H1 (cell line): ENCODE measurements at regions of chr7 and their contacts with region 1.

Region 1: DNA sequence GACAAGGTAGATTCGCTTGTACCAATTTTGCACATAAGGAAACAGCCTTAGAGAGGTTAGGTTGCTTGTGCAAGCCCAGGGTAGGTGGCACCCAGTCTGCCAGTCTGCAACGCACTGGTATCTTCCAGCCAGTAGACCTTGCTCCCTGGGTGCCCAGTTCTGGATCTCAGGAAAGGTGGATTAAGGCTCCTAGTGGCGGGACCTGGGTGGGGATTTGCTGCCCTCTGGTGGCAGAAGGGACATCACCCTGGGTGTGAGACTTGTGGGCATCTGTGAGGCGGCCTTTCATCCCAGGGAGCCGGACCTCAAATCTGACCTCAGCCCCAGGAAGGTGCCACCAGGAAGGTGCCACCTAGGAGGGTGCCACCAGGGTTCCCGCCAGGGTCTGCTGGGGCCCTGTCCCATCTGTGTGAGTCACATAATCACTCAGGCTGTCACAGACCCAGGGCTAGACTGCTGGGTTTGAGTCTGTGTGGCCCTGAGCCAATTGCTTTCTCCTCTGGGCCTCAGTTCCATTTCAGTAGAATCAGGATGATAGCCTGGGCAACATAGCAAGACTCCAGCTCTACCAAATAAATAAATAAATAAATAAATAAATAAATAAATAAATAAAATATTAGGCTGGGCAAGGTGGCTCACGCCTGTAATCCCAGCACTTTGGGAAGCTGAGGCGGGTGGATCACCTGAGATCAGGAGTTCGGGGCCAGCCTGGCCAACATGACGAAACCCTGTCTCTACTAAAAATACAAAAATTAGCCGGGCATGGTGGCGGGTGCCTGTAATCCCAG is 5.3 kb upstream of the PRKRIP1 start:
- DNase-seq: peak; percentile 57 to 93
- H3K4me3 ChIP-seq: no peak overlapping the region
- H3K27ac ChIP-seq: no peak overlapping the region
- H3K4me1 ChIP-seq: peaks cover 0 to 3% (median 0%) of the 10 kb centered on the region in 4 experiments; a peak in 1 of 7 replicates
- H3K27me3 ChIP-seq: no peaks in the 10 kb centered on the region
- CTCF ChIP-seq: peak; percentile 94 to 98 (median 94)
- EP300 ChIP-seq: no peak
- POLR2A ChIP-seq: no peak
- RAD21 ChIP-seq: peak; percentile 95

Region 2: GRCh38 chr7:102306875-102307677 is 83.8 kb before region 1 on chr7:
- CTCF ChIA-PET with region 1: interaction called, 52 read pairs
- POLR2A ChIA-PET with region 1: interaction called, 7 read pairs
- DNase-seq: peak in 1 of 2 experiments; percentile 47
- H3K4me3 ChIP-seq: no peak overlapping the region
- H3K27ac ChIP-seq: no peak overlapping the region
- H3K4me1 ChIP-seq: peaks cover 5 to 13% (median 9%) of the 10 kb centered on the region in 4 experiments
- H3K27me3 ChIP-seq: no peaks in the 10 kb centered on the region
- CTCF ChIP-seq: no peak
- EP300 ChIP-seq: no peak
- POLR2A ChIP-seq: no peak
- RAD21 ChIP-seq: no peak

Region 3: DNA sequence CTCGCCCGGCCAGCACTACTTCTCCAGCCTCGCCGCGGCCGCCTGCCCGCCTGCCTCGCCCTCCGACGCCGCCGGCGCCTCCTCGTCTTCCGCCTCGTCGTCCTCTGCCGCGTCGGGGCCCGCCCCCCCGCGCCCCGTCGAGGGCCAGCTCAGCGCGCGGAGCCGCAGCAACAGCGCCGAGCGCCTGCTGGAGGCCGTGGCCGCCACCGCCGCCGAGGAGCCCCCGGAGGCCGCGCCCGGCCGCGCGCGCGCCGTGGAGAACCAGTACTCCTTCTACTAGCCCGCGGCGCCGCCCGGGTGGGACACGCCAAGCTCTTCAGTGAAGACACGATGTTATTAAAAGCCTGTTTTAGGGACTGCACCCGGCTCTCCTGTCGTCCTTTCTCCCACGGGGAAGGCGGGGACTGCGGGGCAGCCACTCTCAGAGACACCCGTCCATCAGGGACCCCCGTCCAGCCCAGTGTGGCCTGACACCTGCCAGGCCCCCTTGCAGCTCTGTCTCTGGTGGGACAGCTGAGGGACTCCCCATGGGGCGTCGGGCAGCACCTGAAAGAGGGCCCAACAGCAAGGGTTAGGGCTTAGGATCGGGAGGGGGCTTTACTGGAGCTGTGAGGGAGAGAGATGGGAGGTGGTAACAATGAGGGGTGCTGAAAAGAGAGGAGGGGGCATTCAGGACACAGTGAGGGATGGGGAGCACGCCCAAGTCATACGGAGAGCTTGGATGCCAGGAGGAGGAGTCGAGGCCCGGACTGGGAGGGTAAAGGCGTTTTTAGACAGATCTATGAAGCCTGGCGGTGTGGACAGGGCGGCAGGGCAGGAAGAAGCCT is 69.3 kb before region 1 on chr7:
- CTCF ChIA-PET with region 1: interaction called, 51 read pairs
- POLR2A ChIA-PET with region 1: interaction called, 3 read pairs
- DNase-seq: peak in 1 of 2 experiments; percentile 74
- H3K4me3 ChIP-seq: peak overlapping the region in 3 of 4 experiments; percentile 12 to 44 (median 23); a peak in 6 of 8 replicates
- H3K27ac ChIP-seq: no peak overlapping the region
- H3K4me1 ChIP-seq: peaks cover 4 to 12% (median 8%) of the 10 kb centered on the region in 4 experiments; a peak in 6 of 7 replicates
- H3K27me3 ChIP-seq: peaks cover 0 to 2% (median 0%) of the 10 kb centered on the region in 4 experiments; a peak in 3 of 7 replicates
- CTCF ChIP-seq: peak; percentile 13 to 43 (median 21)
- EP300 ChIP-seq: no peak
- POLR2A ChIP-seq: no peak
- RAD21 ChIP-seq: peak in 1 of 2 experiments; percentile 38; a peak in 2 of 4 replicates